Endothelial cell of umbilical vein (primary cell): ENCODE measurements at regions of chr17 and their contacts with region 1.

Region 1: GRCh38 chr17:81601525-81602120 is 35.3 kb downstream of the NPLOC4 start:
- DNase-seq: peak; percentile 80
- H3K4me3 ChIP-seq: no peak overlapping the region
- H3K27ac ChIP-seq: no peak overlapping the region
- H3K4me1 ChIP-seq: peaks cover 6% of the 10 kb centered on the region
- H3K27me3 ChIP-seq: no peaks in the 10 kb centered on the region
- CTCF ChIP-seq: peak; percentile 69 to 71
- POLR2A ChIP-seq: no peak

Region 2: GRCh38 chr17:81512560-81513371 is 88.9 kb before region 1 on chr17 and contains the start of gene ACTG1:
- CTCF ChIA-PET with region 1: interaction called, 11 read pairs
- POLR2A ChIA-PET with region 1: no interaction called
- dilution Hi-C with region 1: no loop called
- intact Hi-C with region 1: loop called (anchors 1 kb)
- DNase-seq: peak; percentile 88
- H3K4me3 ChIP-seq: peak within 1 kb of the TSS; percentile 42 to 93 (median 78)
- H3K27ac ChIP-seq: peak within 1 kb of the TSS; percentile 60
- H3K4me1 ChIP-seq: peaks cover 36% of the 10 kb centered on the region
- H3K27me3 ChIP-seq: no peaks in the 10 kb centered on the region
- CTCF ChIP-seq: no peak
- POLR2A ChIP-seq: peak; percentile 99
- total RNA-seq, gene ACTG1: 6,127 and 6,180 TPM in 2 replicates

Region 3: DNA sequence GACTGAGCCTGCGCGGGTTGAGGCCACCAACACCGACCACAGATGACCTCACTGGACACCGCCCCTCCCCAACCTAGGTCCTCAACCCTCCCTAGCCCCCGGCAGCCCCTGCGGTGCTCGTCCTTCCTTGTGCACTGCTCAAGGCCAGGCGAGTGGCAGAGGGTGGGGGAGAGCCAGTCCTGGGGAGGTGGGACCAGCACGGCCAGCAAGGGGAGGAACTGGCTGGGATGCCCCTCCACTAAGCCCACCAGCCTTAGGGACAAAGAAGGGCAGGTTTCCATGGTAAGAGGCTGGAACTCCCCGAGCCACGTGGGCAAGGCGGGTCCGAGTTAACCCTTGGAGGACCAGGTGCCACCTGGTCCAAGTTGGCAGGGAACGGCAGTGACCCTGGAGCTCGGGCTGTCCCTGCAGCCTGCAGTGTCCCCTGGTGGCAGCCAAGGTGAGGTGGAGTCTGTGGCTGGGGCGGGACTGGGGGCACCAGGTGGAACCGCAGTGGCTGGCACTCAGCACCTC is 64.2 kb before region 1 on chr17:
- CTCF ChIA-PET with region 1: interaction called, 10 read pairs
- POLR2A ChIA-PET with region 1: no interaction called
- dilution Hi-C with region 1: no loop called
- intact Hi-C with region 1: no loop called
- DNase-seq: no peak
- H3K4me3 ChIP-seq: no peak overlapping the region
- H3K27ac ChIP-seq: no peak overlapping the region
- H3K4me1 ChIP-seq: peaks cover 3% of the 10 kb centered on the region
- H3K27me3 ChIP-seq: peaks cover 5 to 18% of the 10 kb centered on the region in 2 experiments
- CTCF ChIP-seq: peak; percentile 58 to 74
- POLR2A ChIP-seq: peak; percentile 18

Region 4: DNA sequence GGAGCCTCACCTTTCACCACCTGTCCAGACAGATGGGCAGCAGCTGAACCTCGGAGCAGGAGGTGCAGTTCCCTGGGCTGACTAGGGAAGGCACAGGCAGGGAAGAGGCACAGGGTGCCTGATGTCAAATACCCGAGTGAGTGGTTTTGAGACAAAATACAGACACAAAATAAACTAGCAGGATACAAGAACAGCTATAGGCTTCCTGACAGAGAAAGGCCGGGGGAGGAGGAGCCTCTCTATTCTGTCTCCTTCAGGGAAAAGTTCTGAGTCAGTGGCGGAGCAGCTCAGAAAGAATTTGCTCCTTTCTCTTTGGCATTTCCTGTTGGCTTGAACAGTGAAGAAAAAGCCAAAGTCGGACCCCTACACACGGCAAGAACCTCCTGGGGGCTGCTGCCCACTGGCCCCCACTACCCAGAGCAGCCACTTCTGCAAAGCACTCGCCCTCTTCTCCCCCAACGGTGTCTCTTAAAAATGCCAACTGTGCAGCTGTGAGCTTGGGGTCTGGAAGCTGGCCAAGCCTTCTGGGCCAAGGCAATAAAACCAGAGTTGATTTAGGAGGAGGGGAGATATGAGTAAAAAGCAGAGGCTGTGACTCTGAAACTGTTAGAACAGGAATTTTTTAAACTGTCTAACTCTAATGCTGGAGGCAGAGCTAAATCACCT is 35.0 kb before region 1 on chr17:
- CTCF ChIA-PET with region 1: interaction called, 23 read pairs
- POLR2A ChIA-PET with region 1: interaction called, 3 read pairs
- dilution Hi-C with region 1: no loop called
- intact Hi-C with region 1: loop called (anchors 5 kb)
- DNase-seq: peak; percentile 97
- H3K4me3 ChIP-seq: peak overlapping the region in 1 of 3 experiments; percentile 27
- H3K27ac ChIP-seq: peak overlapping the region; percentile 96
- H3K4me1 ChIP-seq: peaks cover 60% of the 10 kb centered on the region
- H3K27me3 ChIP-seq: no peaks in the 10 kb centered on the region
- CTCF ChIP-seq: no peak
- POLR2A ChIP-seq: peak; percentile 81